ENCODE measurements at regions of chr3 and their contacts with region 1.

Region 1: DNA sequence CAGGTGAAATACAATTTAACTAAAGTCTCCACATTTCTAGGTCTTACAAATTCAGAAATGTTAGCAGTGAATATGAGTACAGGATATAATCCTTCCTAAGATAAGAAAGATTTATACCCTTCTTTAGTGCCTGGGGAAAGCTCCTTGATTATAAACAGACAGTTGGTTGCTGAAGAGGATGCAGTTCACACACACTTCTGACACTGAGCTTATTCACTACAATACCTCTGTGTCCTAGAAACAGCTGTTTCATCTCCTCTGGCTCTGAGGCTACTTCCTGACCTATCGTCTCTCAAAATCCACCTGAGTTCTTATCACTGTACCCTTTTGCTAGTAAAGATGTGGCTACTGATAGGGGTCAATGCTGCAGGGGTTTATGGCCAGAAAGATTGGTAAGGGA is 57.1 kb downstream of the TP63 start:
- DNase-seq: no peak
- H3K4me3 ChIP-seq: no peak overlapping the region
- H3K27ac ChIP-seq: no peak overlapping the region
- H3K4me1 ChIP-seq: peaks cover 11% of the 10 kb centered on the region
- H3K27me3 ChIP-seq: no peaks in the 10 kb centered on the region
- CTCF ChIP-seq: no peak

Region 2: DNA sequence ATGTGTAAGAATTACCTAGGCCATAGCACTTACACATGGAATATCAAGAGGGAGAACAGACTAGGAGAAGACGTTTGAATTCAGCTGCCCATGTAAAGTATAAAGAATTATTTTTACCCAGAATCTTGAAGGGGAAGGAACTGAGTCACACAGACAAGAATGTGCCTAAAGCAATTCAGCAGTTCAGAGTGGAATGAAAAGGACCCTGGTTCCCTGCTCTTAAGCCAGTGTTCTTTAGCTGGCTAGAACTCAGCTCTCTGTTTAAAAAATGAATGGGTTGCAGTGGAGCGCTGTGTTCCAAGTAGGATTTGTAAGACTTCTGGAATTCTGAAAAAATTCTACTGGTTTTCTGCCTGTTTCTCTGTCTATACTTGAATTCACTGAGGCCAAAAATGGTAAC is 1094.1 kb before region 1 on chr3:
- CTCF ChIA-PET with region 1: no interaction called
- POLR2A ChIA-PET with region 1: no interaction called
- intact Hi-C with region 1: no loop called
- DNase-seq: peak; percentile 18 to 39
- H3K4me3 ChIP-seq: no peak overlapping the region
- H3K27ac ChIP-seq: peak overlapping the region; percentile 28
- H3K4me1 ChIP-seq: peaks cover 12% of the 10 kb centered on the region
- H3K27me3 ChIP-seq: no peaks in the 10 kb centered on the region
- CTCF ChIP-seq: no peak

Region 3: GRCh38 chr3:189121092-189121491 is 567.2 kb before region 1 on chr3:
- CTCF ChIA-PET with region 1: no interaction called
- POLR2A ChIA-PET with region 1: no interaction called
- intact Hi-C with region 1: no loop called
- DNase-seq: no peak
- H3K4me3 ChIP-seq: no peak overlapping the region
- H3K27ac ChIP-seq: no peak overlapping the region
- H3K4me1 ChIP-seq: no peaks in the 10 kb centered on the region
- H3K27me3 ChIP-seq: no peaks in the 10 kb centered on the region
- CTCF ChIP-seq: no peak

Region 4: DNA sequence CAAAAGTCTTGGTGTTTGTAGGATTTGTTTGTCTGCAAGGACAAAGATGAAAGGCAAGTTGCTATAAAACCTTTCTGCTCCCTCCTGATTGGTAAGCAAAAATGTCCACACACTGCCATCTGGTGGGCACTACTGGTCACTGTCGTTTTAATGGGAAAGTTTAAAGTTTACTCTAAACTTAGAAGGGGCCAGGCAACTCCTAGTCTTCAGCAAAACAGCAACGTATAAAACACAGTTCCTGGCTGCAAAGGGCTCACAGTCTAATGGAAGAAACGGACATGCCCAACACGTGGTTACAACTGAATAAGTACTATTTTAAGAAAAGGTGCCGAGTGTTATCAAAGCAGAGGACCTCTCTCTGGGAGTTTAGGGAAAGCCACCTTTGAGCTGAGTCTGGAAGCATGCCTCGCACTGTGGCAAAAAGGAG is 540.2 kb before region 1 on chr3:
- CTCF ChIA-PET with region 1: no interaction called
- POLR2A ChIA-PET with region 1: no interaction called
- intact Hi-C with region 1: no loop called
- DNase-seq: peak; percentile 59
- H3K4me3 ChIP-seq: no peak overlapping the region
- H3K27ac ChIP-seq: no peak overlapping the region
- H3K4me1 ChIP-seq: peaks cover 7% of the 10 kb centered on the region
- H3K27me3 ChIP-seq: no peaks in the 10 kb centered on the region
- CTCF ChIP-seq: peak; percentile 97

Region 5: DNA sequence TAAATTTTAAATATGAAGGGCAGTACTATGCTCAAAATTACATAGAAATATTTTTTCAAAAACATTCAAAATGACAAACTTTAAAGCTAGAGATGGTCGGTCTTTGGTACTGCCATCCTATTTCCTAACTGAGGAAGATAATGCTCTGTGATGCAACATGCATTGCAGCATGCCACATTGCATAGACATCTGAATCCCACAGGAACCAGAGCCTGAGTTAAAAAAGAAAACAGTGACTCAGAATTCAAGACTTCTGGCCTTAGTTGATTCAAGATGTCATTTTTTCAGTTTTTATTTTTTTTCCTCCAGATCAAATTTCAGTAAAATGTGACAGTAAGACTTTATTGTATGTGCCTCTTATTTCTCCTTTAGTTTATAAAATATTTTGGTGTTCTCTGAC is 24.0 kb before region 1 on chr3:
- CTCF ChIA-PET with region 1: no interaction called
- POLR2A ChIA-PET with region 1: interaction called, 10 read pairs
- intact Hi-C with region 1: no loop called
- DNase-seq: peak; percentile 51 to 83
- H3K4me3 ChIP-seq: no peak overlapping the region
- H3K27ac ChIP-seq: peak overlapping the region; percentile 51
- H3K4me1 ChIP-seq: peaks cover 15% of the 10 kb centered on the region
- H3K27me3 ChIP-seq: no peaks in the 10 kb centered on the region
- CTCF ChIP-seq: no peak

Region 6: DNA sequence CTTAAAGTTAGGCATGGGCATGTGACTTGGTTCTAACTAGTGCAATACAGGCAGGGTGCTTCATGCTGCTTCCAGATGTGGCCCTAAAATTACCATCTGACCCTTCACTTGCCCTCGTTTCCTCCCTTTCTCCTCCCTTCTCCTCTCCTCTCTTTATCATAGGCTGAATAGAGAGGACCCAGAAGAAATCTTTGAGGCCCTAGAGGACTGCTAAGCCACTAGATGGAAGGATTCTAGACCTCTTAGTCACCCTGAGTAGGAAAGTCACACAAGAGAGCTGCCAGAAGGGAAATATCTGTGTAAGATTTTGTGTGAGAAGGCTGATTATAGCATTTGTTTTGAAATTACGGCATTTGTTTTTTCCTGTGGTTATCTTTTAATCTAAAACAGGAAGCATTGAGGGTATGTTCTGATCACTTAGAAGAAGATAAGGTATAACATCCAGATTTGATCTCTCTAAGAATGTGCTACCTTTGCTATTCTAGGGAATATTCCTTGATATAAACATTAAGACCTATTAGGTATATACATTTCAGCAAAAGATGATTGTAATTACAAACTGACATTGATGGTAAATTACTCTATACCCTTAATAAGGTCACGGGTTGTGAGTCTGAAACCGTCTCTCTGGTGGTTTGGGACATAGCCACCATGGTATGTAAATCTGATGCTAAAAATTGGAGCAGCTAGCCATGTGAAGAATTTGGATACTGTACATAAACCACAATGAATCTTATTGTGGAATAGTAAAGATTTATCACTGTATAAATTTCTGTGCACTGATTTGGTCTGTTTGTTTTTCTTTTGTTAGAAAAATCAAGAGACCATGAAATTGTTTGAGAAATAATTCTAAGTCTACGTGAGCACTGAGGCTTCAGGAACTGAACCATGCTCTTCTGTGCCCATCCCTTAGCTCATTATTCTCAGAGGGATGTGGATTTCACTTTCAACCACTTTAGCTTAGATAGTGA is 27.0 kb after region 1 on chr3:
- CTCF ChIA-PET with region 1: no interaction called
- POLR2A ChIA-PET with region 1: no interaction called
- intact Hi-C with region 1: no loop called
- DNase-seq: no peak
- H3K4me3 ChIP-seq: no peak overlapping the region
- H3K27ac ChIP-seq: no peak overlapping the region
- H3K4me1 ChIP-seq: peaks cover 19% of the 10 kb centered on the region
- H3K27me3 ChIP-seq: no peaks in the 10 kb centered on the region
- CTCF ChIP-seq: no peak